MCF 10A (cell line): ENCODE measurements at regions of chr3 and their contacts with region 1.

Region 1: GRCh38 chr3:11024181-11024580 is 31.6 kb downstream of the SLC6A1 start:
- DNase-seq: no peak
- H3K4me3 Mint-ChIP-seq: no peak overlapping the region
- H3K27ac Mint-ChIP-seq: no peak overlapping the region
- H3K4me1 Mint-ChIP-seq: no peaks in the 10 kb centered on the region
- H3K27me3 Mint-ChIP-seq: peaks cover 80% of the 10 kb centered on the region
- CTCF ChIP-seq: no peak

Region 2: GRCh38 chr3:10996345-10997013 is 27.7 kb before region 1 on chr3:
- CTCF ChIA-PET with region 1: no interaction called
- POLR2A ChIA-PET with region 1: no interaction called
- intact Hi-C with region 1: loop called (anchors 2 kb)
- DNase-seq: no peak
- H3K4me3 Mint-ChIP-seq: no peak overlapping the region
- H3K27ac Mint-ChIP-seq: no peak overlapping the region
- H3K4me1 Mint-ChIP-seq: peaks cover 9% of the 10 kb centered on the region
- H3K27me3 Mint-ChIP-seq: peaks cover 48% of the 10 kb centered on the region
- CTCF ChIP-seq: no peak